BJ (cell line): ENCODE measurements at regions of chr1 and their contacts with region 1.

Region 1: DNA sequence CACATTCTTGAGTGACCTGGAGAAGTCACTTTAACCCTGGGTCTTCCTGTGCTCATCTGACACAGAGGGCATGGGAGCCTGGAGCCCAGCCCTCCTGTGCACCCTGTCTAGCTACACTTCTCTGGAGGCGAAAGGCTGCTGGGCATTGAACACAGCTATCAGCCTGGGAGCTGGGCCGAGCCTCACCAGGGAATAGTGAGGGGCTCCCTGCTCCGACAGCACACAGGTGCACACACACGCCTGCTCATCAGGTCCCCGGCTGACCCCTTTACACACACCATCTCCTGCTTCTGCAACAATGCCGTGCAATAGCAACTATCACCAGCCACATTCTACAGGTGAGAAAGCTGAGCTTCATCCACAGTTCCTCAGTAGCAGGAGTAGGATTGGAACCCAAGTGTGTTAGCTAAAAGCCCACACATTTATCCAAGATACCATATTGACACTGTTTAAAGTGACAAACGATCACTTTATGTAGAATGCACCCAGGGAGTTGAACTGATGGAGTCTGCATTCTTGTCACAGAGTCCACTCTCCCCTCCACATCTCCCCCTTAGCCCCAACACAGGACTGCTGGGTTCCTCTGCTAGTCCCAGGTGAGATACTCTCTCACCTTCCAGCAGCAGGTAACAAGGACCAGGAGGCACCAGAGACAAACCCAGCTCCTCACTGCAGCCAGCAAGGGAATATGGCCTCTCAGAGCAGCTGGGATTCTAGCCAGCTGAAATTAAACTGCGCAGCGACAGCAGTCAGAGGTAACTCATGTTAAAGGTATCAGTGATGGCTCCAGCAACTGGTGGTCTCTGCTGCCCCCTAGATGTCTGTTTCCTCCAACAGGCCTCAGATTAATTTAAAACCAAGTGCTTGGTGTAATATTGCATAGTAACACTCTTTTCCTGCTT is 18.3 kb upstream of the CAPN8 start:
- DNase-seq: no peak
- H3K4me3 ChIP-seq: no peak overlapping the region
- H3K27me3 ChIP-seq: peaks cover 6% of the 10 kb centered on the region
- CTCF ChIP-seq: peak; percentile 61

Region 2: DNA sequence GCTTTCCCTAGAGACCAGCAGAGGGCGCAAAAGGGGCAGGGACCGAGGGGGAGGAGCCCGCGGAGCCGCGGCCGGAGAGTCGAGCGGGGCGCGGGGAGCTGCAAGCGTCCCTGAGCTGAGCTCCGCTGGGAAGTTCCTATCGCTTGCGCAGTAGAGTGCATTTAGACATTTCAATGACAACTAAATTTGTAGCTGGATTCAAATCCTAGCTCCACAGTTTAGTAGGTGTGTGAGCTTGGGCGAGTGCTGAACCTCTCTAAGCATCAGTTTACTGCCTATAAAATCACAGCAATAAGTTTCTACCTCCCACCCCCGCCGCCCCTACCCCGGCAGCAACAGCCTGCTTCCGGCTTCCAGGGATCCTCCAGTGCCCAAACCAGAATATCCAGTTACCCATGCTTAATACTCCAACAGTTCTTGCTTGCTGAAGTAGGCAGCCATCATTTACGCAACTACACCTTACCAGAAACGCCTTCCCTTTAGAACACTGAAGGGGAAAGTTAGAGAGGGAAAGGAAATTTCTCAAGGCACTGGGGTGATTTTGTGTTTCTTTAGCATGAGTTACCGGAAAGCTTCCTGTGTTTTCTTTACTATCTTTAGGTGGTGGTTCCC is 549.9 kb before region 1 on chr1:
- CTCF ChIA-PET with region 1: interaction called, 55 read pairs
- POLR2A ChIA-PET with region 1: no interaction called
- DNase-seq: no peak
- H3K4me3 ChIP-seq: peak overlapping the region; percentile 13; the same call in 1 of the 2 replicates
- H3K27me3 ChIP-seq: peaks cover 10% of the 10 kb centered on the region
- CTCF ChIP-seq: peak; percentile 98